ENCODE measurements at regions of chr15 and their contacts with region 1.

Region 1: DNA sequence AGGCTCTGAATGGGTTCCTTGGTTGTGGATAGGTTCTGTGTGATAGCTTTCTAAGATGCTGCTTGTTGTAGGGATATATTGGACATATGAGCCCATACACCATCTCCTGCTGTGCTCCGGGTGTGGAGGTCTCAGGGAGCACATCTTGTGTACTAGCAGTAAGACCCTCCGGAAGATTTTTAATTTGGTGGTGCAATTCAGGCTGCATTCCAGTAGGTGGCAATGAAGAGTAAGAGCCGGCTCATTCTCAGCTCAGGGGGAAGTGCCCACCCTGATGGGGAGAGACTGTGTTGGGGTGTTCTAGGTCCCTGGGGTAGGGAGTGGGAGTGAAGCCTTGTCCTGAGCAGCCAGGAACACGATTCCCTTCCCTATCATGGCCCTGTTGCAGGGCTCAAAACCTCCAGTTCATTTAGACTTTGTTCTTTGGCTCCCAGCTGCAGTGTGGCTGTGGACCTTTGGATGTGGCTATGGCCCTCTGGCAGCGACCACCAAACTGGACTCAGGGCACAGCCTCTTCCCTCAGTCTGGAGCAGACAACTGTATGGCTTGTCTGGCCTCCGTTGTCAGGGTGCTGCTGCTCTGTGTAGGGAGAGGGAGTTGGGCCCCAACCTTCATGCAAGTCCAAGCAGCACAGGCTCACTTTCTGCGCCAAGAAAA is 104.7 kb downstream of the UNC13C start:
- DNase-seq: peak; percentile 48
- H3K4me3 ChIP-seq: no peak overlapping the region
- H3K27ac ChIP-seq: no peak overlapping the region
- H3K4me1 ChIP-seq: no peaks in the 10 kb centered on the region
- H3K27me3 ChIP-seq: no peaks in the 10 kb centered on the region
- CTCF ChIP-seq: peak; percentile 80
- EP300 ChIP-seq: no peak
- RAD21 ChIP-seq: peak; percentile 61

Region 2: DNA sequence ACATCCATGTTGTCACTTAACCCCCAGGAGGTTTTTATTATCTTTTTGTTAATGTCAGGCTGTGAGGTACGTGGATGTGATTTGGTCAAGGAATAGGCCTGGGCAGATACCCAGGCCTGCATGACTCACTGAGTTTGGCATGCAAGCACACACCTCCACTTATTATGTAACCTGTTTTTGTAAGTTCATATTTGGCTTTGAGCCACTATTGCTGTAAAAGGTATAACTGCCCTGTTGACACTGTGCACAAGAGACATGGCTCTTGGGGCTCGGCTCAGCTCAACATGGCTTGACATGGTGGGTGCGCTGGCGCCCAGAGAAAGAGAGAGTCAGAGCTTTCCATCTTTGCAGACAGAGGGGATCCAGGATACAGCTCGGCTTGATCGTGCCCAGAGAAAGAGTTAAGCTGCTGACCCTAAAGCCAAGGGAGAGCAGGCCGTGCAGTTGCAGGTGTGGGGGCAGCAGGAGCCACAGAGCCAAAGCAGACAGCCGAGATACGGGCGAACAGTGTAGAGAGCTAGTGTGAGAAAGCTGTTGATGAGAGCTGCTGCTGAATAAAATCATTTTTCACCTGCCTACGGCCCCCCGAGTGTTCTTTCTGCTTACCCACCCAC is 172.6 kb before region 1 on chr15:
- CTCF ChIA-PET with region 1: no interaction called
- POLR2A ChIA-PET with region 1: no interaction called
- DNase-seq: no peak
- H3K4me3 ChIP-seq: no peak overlapping the region
- H3K27ac ChIP-seq: no peak overlapping the region
- H3K4me1 ChIP-seq: peaks cover 0 to 4% of the 10 kb centered on the region in 2 experiments; a peak in 1 of 4 replicates
- H3K27me3 ChIP-seq: no peaks in the 10 kb centered on the region
- CTCF ChIP-seq: no peak
- EP300 ChIP-seq: no peak
- RAD21 ChIP-seq: no peak

Region 3: GRCh38 chr15:54064365-54064764 is 18.6 kb before region 1 on chr15:
- CTCF ChIA-PET with region 1: interaction called, 16 read pairs
- POLR2A ChIA-PET with region 1: no interaction called
- DNase-seq: no peak
- H3K4me3 ChIP-seq: no peak overlapping the region
- H3K27ac ChIP-seq: no peak overlapping the region
- H3K4me1 ChIP-seq: no peaks in the 10 kb centered on the region
- H3K27me3 ChIP-seq: no peaks in the 10 kb centered on the region
- CTCF ChIP-seq: no peak
- EP300 ChIP-seq: no peak
- RAD21 ChIP-seq: no peak

Region 4: DNA sequence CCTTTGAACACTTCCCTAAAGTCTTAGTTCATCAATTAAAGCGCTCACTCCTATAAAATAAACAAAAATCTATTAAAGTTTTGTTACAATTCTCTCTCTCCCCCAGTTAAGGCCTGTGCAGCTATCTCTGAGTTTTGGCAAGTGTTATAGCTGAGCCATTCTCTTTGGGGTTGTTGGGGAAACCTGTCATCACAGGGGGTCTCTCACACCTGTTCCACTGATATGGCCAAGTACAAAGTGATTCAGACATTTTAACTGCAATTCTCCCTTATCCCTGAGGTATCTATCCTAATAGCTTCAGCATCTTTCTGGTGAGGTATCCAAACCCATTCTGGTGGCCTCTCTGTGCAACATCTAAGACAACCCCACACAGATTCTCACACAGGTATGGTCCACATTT is 11.7 kb after region 1 on chr15:
- CTCF ChIA-PET with region 1: interaction called, 15 read pairs
- POLR2A ChIA-PET with region 1: no interaction called
- DNase-seq: no peak
- H3K4me3 ChIP-seq: no peak overlapping the region
- H3K27ac ChIP-seq: no peak overlapping the region
- H3K4me1 ChIP-seq: no peaks in the 10 kb centered on the region
- H3K27me3 ChIP-seq: no peaks in the 10 kb centered on the region
- CTCF ChIP-seq: no peak
- EP300 ChIP-seq: no peak
- RAD21 ChIP-seq: no peak

Measured in SK-N-SH (cell line).